Sciatic nerve (tissue), 2 donors: ENCODE measurements at regions of chr5 and their contacts with region 1.

Region 1: DNA sequence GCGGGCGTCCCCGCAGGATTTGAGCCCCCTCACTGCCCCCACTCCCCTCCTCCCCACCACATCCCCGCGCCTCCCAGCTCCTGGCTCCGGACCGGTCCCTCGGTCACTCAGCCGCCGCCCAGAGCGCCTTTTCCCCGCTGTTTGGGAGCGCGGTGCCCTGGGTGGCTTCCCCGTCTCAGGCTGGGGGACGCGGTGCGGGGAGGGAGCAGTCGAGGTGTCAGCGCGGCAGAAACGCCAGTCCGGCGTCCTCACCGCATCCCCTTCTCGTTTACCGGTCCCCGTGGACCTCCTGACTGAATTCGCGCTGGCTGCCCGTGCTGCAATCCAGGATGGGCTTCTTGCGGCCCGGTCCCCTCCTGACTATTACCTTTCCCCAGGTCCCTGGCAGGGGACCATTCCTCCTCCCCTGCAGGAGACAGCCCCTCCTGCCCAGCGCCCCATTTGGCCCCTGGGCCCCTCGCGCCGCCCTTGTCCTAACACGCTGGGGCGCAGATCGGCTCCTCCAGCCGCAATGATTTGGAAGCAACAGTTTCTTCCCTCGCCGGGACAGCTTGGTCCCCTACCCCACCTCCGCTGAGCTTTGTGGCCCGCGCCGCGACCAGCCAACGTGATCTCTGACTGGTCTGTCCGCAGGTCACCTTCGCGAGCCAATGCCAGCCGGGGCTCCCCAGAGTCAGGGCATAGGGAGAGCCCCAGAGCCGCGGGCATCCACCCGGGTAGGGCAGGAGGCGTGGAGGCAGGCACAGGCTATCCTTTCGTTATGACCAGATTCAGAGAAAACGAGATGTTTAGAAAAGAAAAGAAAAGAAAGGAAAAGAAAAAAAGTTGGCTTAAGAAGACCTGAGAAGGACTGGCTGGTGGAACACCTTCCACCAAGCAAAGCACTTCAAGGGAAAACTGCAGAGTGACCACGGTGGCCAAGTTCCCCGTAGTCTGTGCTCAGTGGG is 1.2 kb downstream of the ANKRD33B start:
- DNase-seq: peak; percentile 71
- ATAC-seq: peak; percentile 27

Region 2: GRCh38 chr5:10481241-10481937 is 83.7 kb before region 1 on chr5:
- intact Hi-C with region 1: loop called (anchors 5 kb)
- DNase-seq: no peak
- ATAC-seq: no peak